ENCODE measurements at regions of chr2 and their contacts with region 1.

Region 1: DNA sequence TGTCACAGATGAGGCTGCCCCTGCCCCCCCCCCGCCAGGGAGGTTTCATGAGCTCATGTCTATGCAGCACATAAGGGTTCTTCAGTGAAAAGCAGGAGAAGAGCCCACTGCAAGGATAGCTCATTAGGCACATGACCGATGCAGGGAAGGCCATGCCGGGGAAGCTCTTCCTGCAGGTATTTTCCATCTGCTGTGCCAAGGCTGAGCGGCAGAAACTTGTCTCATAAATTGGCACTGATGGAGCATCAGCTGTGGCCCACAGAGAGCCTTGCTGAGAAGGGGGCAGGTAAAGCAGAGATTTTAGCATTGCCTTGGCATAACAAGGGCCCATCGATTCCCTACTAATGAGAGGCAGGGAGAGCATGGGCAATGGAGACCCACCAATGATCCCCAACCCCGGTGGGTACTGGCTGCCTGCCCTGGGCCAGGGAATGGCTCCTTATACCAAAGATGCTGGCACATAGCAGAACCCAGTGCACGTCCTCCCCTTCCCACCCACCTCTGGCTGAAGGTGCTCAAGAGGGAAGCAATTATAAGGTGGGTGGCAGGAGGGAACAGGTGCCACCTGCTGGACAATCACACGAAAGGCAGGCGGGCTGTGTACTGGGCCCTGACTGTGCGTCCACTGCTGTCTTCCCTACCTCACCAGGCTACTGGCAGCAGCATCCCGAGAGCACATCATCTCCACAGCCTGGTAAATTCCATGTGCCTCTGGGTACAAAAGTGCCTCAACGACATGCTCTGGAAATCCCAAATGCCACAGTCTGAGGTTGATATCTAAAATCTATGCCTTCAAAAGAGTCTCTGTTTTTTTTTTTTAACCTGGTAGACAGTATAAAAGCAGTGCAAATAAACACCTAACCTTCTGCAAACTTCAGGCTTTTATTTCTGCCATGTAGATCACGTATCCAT is 41.4 kb downstream of the STEAP3 start:
- DNase-seq: peak; percentile 81
- CTCF ChIP-seq: peak; percentile 91

Region 2: GRCh38 chr2:119218478-119219064 is 46.5 kb before region 1 on chr2:
- CTCF ChIA-PET with region 1: interaction called, 12 read pairs
- POLR2A ChIA-PET with region 1: no interaction called
- DNase-seq: no peak
- CTCF ChIP-seq: peak; percentile 39

Region 3: GRCh38 chr2:119234377-119235019 is 30.5 kb before region 1 on chr2:
- CTCF ChIA-PET with region 1: interaction called, 21 read pairs
- POLR2A ChIA-PET with region 1: no interaction called
- DNase-seq: no peak
- CTCF ChIP-seq: peak; percentile 31

Region 4: DNA sequence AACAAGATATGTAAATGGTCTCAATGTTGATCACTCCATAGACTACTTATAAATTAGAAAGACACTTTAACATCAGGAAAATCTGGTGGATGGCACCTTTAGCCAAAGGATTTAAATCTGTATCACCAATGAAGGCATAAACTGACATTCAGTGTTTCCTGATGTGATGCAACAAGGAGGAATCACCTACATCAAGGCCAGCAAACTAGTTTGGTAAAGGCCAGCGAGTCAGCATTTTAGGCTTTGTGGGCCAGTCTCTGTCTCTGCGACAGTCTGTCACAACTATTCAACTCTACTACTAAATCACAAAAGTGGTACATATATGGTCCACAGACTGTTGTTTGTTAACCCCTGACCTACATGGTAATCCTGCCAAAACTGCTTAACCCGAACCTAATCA is 68.3 kb after region 1 on chr2:
- CTCF ChIA-PET with region 1: no interaction called
- POLR2A ChIA-PET with region 1: no interaction called
- DNase-seq: no peak
- CTCF ChIP-seq: no peak

Measured in GM10248 (cell line).